Cardiac septum (tissue), 1 donor: ENCODE measurements at regions of chr18 and their contacts with region 1.

Region 1: DNA sequence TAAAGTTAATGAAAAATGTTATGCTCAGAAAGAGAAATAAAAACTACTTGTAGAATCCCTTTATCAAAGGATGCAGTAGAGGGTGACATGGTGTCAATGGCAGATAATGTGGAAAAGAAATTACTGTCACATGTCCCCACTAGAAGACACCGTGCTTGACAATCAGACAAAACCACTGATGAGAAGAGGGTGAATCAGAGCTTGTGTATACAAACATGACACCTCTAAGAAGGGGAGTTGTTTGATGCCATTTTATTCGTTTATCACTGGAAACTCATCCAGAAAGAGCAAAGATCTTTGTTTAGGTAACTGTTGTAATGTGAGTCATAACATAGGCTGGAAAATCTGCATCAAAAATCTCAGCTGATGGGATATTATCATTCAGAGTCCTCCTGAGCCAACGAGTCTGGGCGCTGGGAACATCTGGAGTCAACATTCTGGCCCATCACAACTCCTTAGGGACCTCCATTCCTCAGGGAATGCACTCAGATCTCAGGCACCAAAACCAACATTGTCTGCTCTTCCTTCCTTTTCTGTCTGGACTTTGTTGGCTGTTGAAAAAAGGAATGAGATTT is 49.5 kb upstream of the RAB12 start:
- DNase-seq: no peak

Region 2: GRCh38 chr18:8608795-8609658 is 49.3 kb after region 1 on chr18 and contains the start of gene RAB12:
- intact Hi-C with region 1: loop called (anchors 5 kb)
- DNase-seq: peak; percentile 95
- total RNA-seq, gene RAB12: 86.8 TPM